ENCODE measurements at regions of chr2 and their contacts with region 1.

Region 1: GRCh38 chr2:225064362-225064761 is 22.1 kb upstream of the DOCK10 start:
- DNase-seq: no peak
- H3K4me3 Mint-ChIP-seq: no peak overlapping the region
- H3K27ac Mint-ChIP-seq: no peak overlapping the region
- H3K4me1 Mint-ChIP-seq: peaks cover 45% of the 10 kb centered on the region
- H3K27me3 Mint-ChIP-seq: no peaks in the 10 kb centered on the region

Region 2: GRCh38 chr2:225052703-225053102 is 11.7 kb before region 1 on chr2:
- CTCF ChIA-PET with region 1: no interaction called
- intact Hi-C with region 1: loop called (anchors 1 kb)
- DNase-seq: peak; percentile 42
- H3K4me3 Mint-ChIP-seq: no peak overlapping the region
- H3K27ac Mint-ChIP-seq: peak overlapping the region; percentile 70
- H3K4me1 Mint-ChIP-seq: peaks cover 49% of the 10 kb centered on the region
- H3K27me3 Mint-ChIP-seq: no peaks in the 10 kb centered on the region

Measured in activated naive CD4-positive, alpha-beta T cell treated with anti-CD3 and anti-CD28 coated beads for 36 hours (primary cell).